Activated CD4-positive, alpha-beta T cell treated with anti-CD3 and anti-CD28 coated beads for 36 hours (primary cell): ENCODE measurements at regions of chr12 and their contacts with region 1.

Region 1: GRCh38 chr12:11648831-11649702 is at the start of gene ETV6:
- DNase-seq: peak; percentile 89
- ATAC-seq: peak; percentile 52
- H3K4me3 Mint-ChIP-seq: peak within 1 kb of the TSS; percentile 93
- H3K27ac Mint-ChIP-seq: peak within 1 kb of the TSS; percentile 100
- H3K4me1 Mint-ChIP-seq: peaks cover 27% of the 10 kb centered on the region
- H3K27me3 Mint-ChIP-seq: no peaks in the 10 kb centered on the region
- total RNA-seq, gene ETV6: 53.5 to 56.7 TPM

Region 2: GRCh38 chr12:10212201-10213131 is 1436.6 kb before region 1 on chr12 and contains the start of gene GABARAPL1:
- CTCF ChIA-PET with region 1: no interaction called
- POLR2A ChIA-PET with region 1: no interaction called
- intact Hi-C with region 1: loop called in 1 of 2 experiments (anchors 5 kb)
- DNase-seq: peak; percentile 93
- ATAC-seq: peak; percentile 86
- H3K4me3 Mint-ChIP-seq: peak within 1 kb of the TSS; percentile 82
- H3K27ac Mint-ChIP-seq: peak within 1 kb of the TSS; percentile 87
- H3K4me1 Mint-ChIP-seq: peaks cover 29% of the 10 kb centered on the region
- H3K27me3 Mint-ChIP-seq: no peaks in the 10 kb centered on the region
- total RNA-seq, gene GABARAPL1: 2.3 to 2.9 TPM

Region 3: DNA sequence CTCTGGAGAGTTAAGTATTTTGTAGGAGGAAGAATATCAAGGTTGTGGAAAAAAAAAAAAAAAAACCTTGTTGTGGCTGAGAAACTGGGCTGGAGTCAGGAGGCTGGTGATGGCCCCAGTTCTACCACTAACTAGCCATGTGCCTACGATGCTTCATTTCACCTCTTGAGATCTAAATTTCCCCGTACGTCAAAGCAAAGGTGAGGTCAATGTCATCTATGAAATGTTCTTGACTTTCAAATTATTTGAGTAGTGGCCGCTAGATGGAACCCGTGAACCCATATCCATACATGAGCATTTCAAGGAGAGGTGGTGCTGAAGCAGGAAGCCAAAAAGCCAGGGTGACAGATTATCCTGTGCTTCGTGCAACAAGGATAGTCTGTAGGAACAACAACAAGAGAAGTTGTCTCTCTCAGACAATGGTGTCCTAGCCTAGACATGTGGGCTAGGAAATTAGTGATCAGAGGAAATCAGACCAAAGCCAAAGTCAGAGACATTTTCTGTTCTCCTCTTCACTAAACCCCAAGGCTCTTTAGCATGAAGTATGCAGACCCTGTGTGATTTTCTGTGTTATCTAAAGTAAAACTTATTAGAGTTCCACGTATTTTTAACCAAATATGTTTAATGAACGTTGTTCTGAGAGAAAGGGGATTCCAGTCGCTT is 95.1 kb before region 1 on chr12:
- CTCF ChIA-PET with region 1: no interaction called
- POLR2A ChIA-PET with region 1: no interaction called
- intact Hi-C with region 1: loop called (anchors 2 to 5 kb)
- DNase-seq: peak; percentile 76
- ATAC-seq: peak; percentile 79
- H3K4me3 Mint-ChIP-seq: no peak overlapping the region
- H3K27ac Mint-ChIP-seq: no peak overlapping the region
- H3K4me1 Mint-ChIP-seq: peaks cover 28% of the 10 kb centered on the region
- H3K27me3 Mint-ChIP-seq: no peaks in the 10 kb centered on the region

Region 4: DNA sequence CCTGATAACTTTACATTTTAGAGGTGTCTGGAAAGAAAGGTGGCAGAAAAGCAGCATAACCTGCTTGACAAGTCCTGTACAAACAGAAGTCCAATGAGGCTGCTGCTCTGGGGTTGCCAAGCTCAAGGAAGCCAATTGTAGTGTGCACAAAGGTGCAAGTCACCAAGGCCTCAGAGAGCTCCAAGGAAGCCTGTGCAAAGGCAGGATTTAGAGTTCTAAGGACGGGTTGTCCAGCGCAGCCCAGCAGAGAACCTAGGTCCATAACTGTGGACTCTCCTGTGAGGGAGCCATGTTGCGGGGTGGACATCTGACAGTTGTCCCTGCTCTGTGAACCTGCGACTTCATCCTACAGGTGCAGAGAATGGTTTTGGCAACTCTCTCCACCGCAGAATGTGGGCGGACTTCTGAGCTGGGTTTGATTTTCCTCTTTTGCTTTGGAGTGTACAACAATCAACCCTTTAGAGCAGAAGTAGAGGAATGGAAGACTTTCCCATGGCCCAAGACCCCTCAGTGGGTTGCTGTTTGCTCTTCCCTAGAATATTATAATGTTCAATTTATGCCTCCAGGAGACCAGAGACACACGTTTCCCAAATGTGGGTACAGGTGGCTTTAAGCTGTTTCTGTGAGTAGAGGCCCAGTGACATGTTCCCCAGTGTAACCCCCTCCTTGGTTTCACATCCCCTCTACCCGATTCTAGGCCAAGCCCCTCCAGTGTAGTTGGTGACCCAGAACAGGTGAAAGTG is 81.4 kb after region 1 on chr12:
- CTCF ChIA-PET with region 1: interaction called, 3 read pairs
- POLR2A ChIA-PET with region 1: interaction called, 7 read pairs
- intact Hi-C with region 1: loop called (anchors 1 kb)
- DNase-seq: peak; percentile 39
- ATAC-seq: no peak
- H3K4me3 Mint-ChIP-seq: peak overlapping the region; percentile 21
- H3K27ac Mint-ChIP-seq: peak overlapping the region; percentile 88
- H3K4me1 Mint-ChIP-seq: peaks cover 86% of the 10 kb centered on the region
- H3K27me3 Mint-ChIP-seq: no peaks in the 10 kb centered on the region

Region 5: GRCh38 chr12:11836282-11837151 is 187.4 kb after region 1 on chr12:
- CTCF ChIA-PET with region 1: no interaction called
- POLR2A ChIA-PET with region 1: no interaction called
- intact Hi-C with region 1: loop called (anchors 1 to 2 kb)
- DNase-seq: peak; percentile 88
- ATAC-seq: peak; percentile 86
- H3K4me3 Mint-ChIP-seq: peak overlapping the region; percentile 45
- H3K27ac Mint-ChIP-seq: peak overlapping the region; percentile 95
- H3K4me1 Mint-ChIP-seq: peaks cover 77% of the 10 kb centered on the region
- H3K27me3 Mint-ChIP-seq: no peaks in the 10 kb centered on the region

Region 6: GRCh38 chr12:12008931-12009611 is 360.0 kb after region 1 on chr12:
- CTCF ChIA-PET with region 1: interaction called, 7 read pairs
- POLR2A ChIA-PET with region 1: interaction called, 22 read pairs
- intact Hi-C with region 1: loop called (anchors 1 kb)
- DNase-seq: peak; percentile 84
- ATAC-seq: peak; percentile 64
- H3K4me3 Mint-ChIP-seq: peak overlapping the region; percentile 71
- H3K27ac Mint-ChIP-seq: peak overlapping the region; percentile 96
- H3K4me1 Mint-ChIP-seq: peaks cover 77% of the 10 kb centered on the region
- H3K27me3 Mint-ChIP-seq: no peaks in the 10 kb centered on the region